MCF 10A (cell line): ENCODE measurements at regions of chr5 and their contacts with region 1.

Region 1: DNA sequence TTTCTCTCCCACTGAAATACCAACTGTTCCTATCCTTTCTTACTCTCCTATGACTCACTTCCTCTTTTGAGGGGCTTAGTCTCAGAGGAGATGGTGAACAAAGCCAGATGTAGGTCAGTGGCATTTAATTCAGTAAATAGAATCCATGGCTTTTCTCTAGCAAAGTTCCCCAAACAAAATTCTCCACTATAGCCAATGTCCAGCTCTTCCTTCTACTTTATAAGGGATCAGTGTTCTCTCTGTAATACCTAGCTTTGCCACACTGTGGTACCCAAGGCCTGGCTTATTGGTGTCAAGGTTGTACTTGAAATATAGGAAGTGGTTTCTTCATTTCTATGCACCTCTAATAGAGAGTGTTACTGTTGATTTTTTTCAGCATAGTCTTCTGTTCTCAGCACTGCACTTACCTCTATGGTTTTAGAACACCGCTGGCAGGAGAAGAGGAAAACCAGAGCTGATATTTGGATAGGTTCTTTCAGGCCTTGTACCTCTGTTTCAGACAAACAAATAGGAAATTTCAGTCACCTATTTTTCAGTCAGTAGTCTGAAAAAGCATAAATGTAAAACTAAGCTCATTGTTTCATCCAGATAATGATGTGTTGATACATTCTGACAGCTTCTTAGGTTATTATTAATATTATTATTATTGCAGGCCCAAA is 40.6 kb upstream of the ITGA2 start:
- DNase-seq: peak; percentile 88
- H3K4me3 Mint-ChIP-seq: no peak overlapping the region
- H3K27ac Mint-ChIP-seq: no peak overlapping the region
- H3K4me1 Mint-ChIP-seq: peaks cover 22% of the 10 kb centered on the region
- H3K27me3 Mint-ChIP-seq: no peaks in the 10 kb centered on the region
- CTCF ChIP-seq: peak; percentile 87

Region 2: DNA sequence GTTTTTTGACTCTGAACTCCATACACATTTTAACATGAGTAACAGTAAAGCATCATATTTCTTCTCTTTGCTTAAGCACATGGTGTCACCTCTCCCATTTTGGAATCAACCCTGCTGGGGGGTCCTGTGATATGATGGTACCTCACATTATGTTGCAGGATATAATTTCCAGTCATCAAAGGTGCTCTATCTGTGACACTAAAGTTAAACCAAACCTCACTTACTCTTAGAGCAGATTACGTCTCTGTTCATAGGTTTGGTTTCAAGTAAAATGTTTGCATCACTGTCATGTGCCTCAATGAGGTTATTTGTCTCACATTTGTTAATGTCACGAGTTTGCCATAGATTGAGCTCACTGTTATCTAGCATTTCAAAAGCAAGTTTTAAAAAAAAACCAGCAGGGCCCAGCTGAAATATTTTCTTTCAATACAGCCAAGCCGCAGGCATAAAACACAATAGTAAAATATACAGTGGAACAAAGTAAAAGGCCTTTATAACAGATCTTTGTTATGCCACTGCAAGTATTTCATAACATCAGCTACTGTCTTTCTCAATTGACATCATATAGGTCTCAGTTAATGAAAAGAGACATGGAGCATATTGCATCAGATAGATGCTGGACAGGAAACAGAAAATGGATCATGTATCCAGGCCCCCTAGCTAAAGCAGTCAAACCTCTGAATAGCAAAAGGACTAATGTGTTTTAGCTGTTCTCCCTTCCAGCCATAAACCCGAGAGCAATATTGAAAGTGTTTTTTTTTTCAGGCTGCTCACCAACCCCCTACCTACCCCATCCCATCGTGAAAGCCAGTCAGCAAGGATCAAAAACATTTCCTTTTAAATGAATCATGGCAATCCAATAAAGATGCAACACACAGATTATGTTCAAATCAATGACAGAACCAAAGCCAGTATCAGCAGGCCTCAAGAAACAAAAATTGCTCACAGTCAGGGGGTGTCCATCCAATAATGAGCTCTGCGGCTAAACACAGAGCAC is 342.9 kb before region 1 on chr5:
- CTCF ChIA-PET with region 1: no interaction called
- POLR2A ChIA-PET with region 1: no interaction called
- intact Hi-C with region 1: no loop called
- DNase-seq: no peak
- H3K4me3 Mint-ChIP-seq: no peak overlapping the region
- H3K27ac Mint-ChIP-seq: no peak overlapping the region
- H3K4me1 Mint-ChIP-seq: no peaks in the 10 kb centered on the region
- H3K27me3 Mint-ChIP-seq: peaks cover 69% of the 10 kb centered on the region
- CTCF ChIP-seq: no peak

Region 3: GRCh38 chr5:52825826-52826225 is 122.7 kb before region 1 on chr5:
- CTCF ChIA-PET with region 1: no interaction called
- POLR2A ChIA-PET with region 1: no interaction called
- intact Hi-C with region 1: no loop called
- DNase-seq: no peak
- H3K4me3 Mint-ChIP-seq: no peak overlapping the region
- H3K27ac Mint-ChIP-seq: no peak overlapping the region
- H3K4me1 Mint-ChIP-seq: no peaks in the 10 kb centered on the region
- H3K27me3 Mint-ChIP-seq: no peaks in the 10 kb centered on the region
- CTCF ChIP-seq: no peak

Region 4: DNA sequence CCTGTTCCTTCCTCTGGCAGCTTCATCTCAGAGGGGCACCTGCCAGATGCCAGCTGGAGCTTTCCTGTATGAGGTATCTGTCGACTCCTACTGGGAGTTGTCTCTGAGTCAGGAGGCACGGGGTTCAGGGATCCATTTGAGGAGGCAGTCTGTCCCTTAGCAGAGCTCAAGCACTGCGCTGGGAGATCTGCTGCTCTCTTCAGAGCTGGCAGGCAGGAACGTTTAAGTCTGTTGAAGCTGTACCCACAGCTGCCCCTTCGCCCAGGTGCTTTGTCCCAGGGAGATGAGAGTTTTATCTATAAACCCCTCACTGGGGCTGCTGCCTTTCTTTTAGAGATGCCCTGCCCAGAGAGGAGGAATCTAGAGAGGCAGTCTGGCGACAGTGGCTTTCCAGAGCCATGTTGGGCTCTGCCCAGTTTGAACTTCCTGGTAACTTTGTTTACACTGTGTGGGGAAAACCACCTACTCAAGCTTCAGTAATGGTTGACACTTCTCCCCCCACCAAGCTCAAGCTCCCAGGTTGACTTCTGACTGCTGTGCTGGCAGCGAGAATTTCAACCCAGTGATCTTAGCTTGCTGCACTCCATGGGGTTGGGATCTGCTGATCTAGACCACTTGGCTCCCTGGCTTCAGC is 28.8 kb after region 1 on chr5:
- CTCF ChIA-PET with region 1: interaction called, 14 read pairs
- POLR2A ChIA-PET with region 1: no interaction called
- intact Hi-C with region 1: no loop called
- DNase-seq: no peak
- H3K4me3 Mint-ChIP-seq: no peak overlapping the region
- H3K27ac Mint-ChIP-seq: no peak overlapping the region
- H3K4me1 Mint-ChIP-seq: no peaks in the 10 kb centered on the region
- H3K27me3 Mint-ChIP-seq: no peaks in the 10 kb centered on the region
- CTCF ChIP-seq: no peak

Region 5: GRCh38 chr5:53008751-53009150 is 60.2 kb after region 1 on chr5:
- CTCF ChIA-PET with region 1: interaction called, 10 read pairs
- POLR2A ChIA-PET with region 1: no interaction called
- intact Hi-C with region 1: no loop called
- DNase-seq: peak; percentile 76
- H3K4me3 Mint-ChIP-seq: no peak overlapping the region
- H3K27ac Mint-ChIP-seq: no peak overlapping the region
- H3K4me1 Mint-ChIP-seq: peaks cover 22% of the 10 kb centered on the region
- H3K27me3 Mint-ChIP-seq: no peaks in the 10 kb centered on the region
- CTCF ChIP-seq: no peak

Region 6: GRCh38 chr5:53048248-53048647 is 99.7 kb after region 1 on chr5:
- CTCF ChIA-PET with region 1: interaction called, 12 read pairs
- POLR2A ChIA-PET with region 1: no interaction called
- intact Hi-C with region 1: no loop called
- DNase-seq: no peak
- H3K4me3 Mint-ChIP-seq: no peak overlapping the region
- H3K27ac Mint-ChIP-seq: no peak overlapping the region
- H3K4me1 Mint-ChIP-seq: no peaks in the 10 kb centered on the region
- H3K27me3 Mint-ChIP-seq: no peaks in the 10 kb centered on the region
- CTCF ChIP-seq: no peak

Region 7: GRCh38 chr5:53095931-53096525 is 147.5 kb after region 1 on chr5:
- CTCF ChIA-PET with region 1: interaction called, 248 read pairs
- POLR2A ChIA-PET with region 1: interaction called, 19 read pairs
- intact Hi-C with region 1: loop called (anchors 1 kb)
- DNase-seq: peak; percentile 70
- H3K4me3 Mint-ChIP-seq: no peak overlapping the region
- H3K27ac Mint-ChIP-seq: no peak overlapping the region
- H3K4me1 Mint-ChIP-seq: peaks cover 7% of the 10 kb centered on the region
- H3K27me3 Mint-ChIP-seq: no peaks in the 10 kb centered on the region
- CTCF ChIP-seq: peak; percentile 69

Region 8: DNA sequence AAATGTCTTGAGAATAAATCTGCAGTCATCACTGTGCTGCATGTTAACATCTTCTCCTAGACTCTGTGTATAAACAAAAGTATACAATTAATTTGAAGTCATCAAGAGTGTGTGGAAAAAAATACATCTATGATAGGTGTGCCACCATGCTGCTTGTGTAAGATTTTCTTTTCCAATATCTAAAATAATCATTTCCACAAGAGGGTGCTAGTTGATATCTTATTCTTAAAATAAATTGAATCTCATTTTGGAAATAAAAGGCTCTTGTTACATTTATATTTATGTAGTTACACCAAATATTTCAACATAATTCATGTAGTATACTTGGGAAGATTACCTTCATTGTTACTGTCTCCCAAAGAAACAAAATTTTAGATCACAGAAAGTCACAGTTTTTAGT is 175.2 kb after region 1 on chr5:
- CTCF ChIA-PET with region 1: interaction called, 12 read pairs
- POLR2A ChIA-PET with region 1: no interaction called
- intact Hi-C with region 1: no loop called
- DNase-seq: peak; percentile 11
- H3K4me3 Mint-ChIP-seq: no peak overlapping the region
- H3K27ac Mint-ChIP-seq: no peak overlapping the region
- H3K4me1 Mint-ChIP-seq: peaks cover 5% of the 10 kb centered on the region
- H3K27me3 Mint-ChIP-seq: no peaks in the 10 kb centered on the region
- CTCF ChIP-seq: peak; percentile 12

Region 9: DNA sequence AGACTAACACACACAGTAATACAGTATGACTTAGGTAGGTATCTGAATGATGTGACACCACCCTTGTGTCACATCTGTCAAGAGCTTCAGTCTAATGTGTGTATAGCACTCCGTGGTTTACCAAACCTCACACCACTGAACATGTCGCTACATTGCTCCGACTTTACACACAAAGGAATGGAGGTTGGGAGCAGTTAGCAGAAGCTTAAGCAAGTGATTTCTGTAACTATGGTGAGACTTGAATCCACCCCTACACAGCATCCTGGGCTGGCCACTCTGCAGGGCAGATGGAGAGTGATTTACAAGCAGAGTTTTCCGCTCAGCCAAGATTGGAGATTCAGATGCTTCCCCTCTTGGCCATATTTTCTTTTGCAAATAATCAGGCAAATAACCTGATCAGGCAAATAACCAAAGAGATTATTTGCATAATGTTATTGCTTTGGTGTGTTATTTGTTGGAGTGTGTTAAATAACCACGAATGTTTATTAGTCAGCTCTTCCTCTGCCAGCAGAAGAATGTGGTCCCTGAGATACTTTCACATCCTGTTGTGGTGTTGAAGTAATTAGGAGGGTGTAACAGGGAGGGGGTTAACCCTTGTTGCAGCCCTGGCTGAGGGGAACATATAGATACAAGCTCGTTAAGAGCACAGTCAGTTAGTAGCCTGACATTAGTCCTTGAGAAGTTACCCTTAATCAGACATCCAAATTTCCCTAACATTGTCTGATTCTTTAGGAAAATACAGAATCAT is 1661.8 kb after region 1 on chr5:
- CTCF ChIA-PET with region 1: no interaction called
- POLR2A ChIA-PET with region 1: no interaction called
- intact Hi-C with region 1: no loop called
- DNase-seq: no peak
- H3K4me3 Mint-ChIP-seq: no peak overlapping the region
- H3K27ac Mint-ChIP-seq: no peak overlapping the region
- H3K4me1 Mint-ChIP-seq: no peaks in the 10 kb centered on the region
- H3K27me3 Mint-ChIP-seq: no peaks in the 10 kb centered on the region
- CTCF ChIP-seq: no peak